Posterior cingulate gyrus (tissue), 11 donors: ENCODE measurements at regions of chr2 and their contacts with region 1.

Region 1: GRCh38 chr2:155377266-155377680 is 678.8 kb downstream of the KCNJ3 start:
- DNase-seq: no peak

Region 2: DNA sequence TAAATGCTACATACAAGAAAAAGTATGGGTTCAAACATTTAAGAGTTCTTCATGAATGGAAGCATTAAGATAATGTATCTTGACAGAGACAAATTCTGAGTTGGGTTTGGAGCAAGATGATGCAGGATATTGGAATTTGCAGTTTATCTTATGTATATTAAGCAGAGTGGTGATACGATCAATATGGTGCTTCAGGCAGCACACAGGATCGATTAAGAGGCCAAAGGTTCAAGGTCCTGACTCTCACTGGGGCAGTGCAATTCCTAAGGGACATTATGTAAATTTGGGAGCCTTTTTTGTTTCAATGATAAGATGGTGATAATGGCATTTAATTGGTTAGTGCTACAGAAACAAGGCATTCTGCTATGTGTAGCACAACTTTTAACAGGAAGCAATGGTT is 296.9 kb before region 1 on chr2:
- intact Hi-C with region 1: no loop called
- DNase-seq: no peak

Region 3: GRCh38 chr2:155815886-155816285 is 438.6 kb after region 1 on chr2:
- intact Hi-C with region 1: loop called (anchors 2 kb)
- DNase-seq: peak in 4 of 10 donors; percentile 6 to 72 (median 36)

Region 4: GRCh38 chr2:156332534-156333273 is 955.4 kb after region 1 on chr2 and contains the start of gene NR4A2:
- intact Hi-C with region 1: loop called (anchors 10 kb)
- DNase-seq: peak; percentile 74 to 97 (median 84)

Region 5: GRCh38 chr2:156589381-156590079 is 1212.3 kb after region 1 on chr2:
- intact Hi-C with region 1: loop called (anchors 5 kb)
- DNase-seq: peak in 1 of 10 donors; percentile 28

Region 6: DNA sequence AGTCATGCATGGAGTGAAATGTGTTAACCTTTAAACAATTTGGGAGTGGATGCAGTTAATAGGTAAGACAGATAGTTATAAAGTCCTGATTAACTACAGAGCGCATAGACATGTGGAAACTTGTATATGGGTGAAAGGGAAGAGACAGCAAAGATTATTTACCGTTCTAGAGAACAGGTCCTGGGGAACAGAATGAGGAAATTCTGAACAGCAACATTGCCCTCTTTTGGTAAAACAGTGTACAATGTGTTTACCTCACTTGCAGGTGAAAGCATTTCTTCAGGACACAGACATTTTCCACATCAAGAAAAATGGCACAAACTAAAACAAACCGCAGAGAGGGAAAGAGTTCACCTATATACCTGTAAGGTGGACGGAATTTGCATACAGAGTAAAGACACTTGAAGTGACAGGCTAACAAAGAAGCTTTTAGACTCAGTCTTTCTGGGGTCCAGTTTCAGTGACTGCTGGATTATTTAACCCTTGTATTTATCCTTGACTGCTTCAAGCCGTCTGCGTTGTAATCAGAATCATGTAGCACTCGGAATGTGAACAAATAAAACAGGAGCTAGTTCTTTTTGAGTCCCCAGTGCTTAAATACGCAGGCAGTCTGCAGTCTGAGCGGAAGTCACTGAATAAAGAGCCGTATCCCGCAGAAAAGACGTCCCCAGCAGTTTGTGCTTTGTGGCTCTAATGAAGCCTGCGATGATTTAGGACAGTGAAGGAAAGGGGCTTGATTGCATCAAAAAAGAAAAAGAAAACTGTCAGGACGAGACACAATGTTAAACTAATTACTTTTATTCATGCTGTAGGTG is 1515.4 kb after region 1 on chr2:
- intact Hi-C with region 1: loop called (anchors 5 kb)
- DNase-seq: no peak

Region 7: GRCh38 chr2:157061799-157062198 is 1684.5 kb after region 1 on chr2:
- intact Hi-C with region 1: loop called (anchors 5 kb)
- DNase-seq: no peak

Region 8: DNA sequence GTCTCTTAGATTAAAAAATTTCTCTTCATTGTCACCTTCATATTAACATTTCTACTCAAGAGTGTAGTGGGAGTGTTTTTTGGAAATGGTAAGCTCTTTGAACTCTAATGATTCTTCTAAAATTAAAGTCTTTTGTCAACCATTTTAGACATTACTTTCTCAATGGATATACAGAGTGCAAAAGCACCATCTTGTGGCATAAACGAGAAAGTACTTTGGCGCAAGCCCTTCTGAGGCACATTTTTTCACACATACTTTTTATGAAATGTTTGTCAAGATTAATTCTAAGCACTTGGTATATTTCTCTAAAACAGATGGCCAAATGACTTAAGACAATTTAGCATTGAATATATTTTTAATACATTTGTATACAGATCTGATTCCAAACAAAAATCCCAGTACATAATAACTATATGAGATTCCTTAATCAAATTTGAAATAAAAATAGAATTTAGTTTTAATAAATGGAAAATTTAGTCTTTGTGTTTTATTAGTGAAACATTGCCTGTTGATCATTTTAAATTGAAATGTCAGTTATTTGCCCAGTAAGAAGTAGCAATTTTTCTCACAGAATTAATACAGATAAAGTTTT is 1816.9 kb after region 1 on chr2:
- intact Hi-C with region 1: loop called (anchors 2 kb)
- DNase-seq: no peak